Posterior vena cava (tissue), 2 donors: ENCODE measurements at regions of chr11 and their contacts with region 1.

Region 1: DNA sequence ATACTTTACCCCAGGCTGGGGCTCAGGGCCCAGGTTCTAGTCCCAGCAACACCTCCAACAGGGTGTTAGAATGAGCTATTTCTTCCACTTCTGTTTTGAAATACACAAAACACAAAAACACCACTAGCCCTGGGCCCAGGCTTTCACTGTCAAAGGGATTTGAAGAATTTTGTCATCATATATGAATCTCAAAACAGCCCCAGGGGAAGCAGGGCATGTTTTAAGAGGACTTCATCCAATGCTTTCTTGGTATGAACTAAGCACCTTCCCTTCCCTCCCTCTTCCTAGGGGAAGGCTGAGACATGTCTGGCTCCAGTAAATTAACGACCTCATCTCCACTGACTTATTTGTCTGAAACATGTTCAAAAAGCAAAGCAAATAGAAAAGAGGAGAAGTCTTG is 75.7 kb upstream of the INCENP start:
- DNase-seq: no peak

Region 2: DNA sequence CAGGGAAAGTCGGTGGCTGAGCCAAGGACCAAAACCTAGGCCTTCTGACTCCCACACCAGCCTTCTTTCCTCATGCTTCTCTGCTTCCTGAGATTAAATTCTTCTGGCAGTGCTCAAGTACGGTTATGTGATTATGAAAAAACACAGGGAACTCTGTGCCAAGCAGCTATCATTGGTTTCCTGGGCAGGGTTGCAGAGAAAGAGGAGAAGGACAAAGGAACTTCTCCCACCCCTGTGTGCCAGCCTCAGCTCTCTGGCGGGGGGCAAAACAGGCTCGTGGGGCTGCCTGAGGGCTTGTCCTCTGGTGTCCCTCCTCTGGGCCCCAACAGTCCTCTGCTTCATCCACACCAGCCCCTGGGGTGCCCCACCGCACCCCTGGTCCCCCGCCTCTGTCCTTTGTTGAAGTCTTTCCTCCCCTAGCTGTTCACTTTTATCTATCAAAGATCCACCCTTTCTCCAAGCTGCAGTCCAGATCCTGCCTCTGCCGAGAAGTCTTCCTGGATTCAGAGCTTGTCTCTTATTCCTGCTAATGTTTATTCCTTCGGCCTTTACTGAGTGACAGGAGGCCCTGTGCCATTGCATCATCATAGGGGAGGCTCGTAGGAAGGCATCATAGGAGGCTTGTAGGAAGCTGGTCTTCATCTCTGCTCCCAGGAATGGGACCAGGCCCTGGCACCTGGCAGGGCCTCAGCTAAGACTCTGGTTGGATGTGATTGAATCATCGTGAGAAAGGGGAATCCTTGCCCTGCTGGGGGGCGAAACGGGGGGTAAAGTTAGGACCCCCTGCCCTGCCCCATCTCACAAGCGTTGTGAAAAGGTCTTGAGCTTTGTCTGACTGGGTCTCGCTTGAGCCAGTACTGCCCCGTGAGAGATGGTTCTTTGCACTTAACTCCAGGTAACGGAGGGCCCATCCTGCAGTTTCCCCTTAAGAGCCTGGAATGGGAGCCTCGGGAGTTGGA is 69.1 kb before region 1 on chr11:
- intact Hi-C with region 1: no loop called
- DNase-seq: peak; percentile 77

Region 3: GRCh38 chr11:62067741-62068140 is 19.7 kb after region 1 on chr11:
- intact Hi-C with region 1: loop called in 1 of 2 experiments (anchors 1 kb)
- DNase-seq: no peak